Transverse colon (tissue), 4 donors: ENCODE measurements at regions of chr5 and their contacts with region 1.

Region 1: GRCh38 chr5:27158775-27159174 is 120.4 kb upstream of the CDH9 start:
- DNase-seq: no peak
- H3K4me3 ChIP-seq: no peak overlapping the region
- H3K27ac ChIP-seq: no peak overlapping the region
- H3K4me1 ChIP-seq: no peaks in the 10 kb centered on the region
- H3K27me3 ChIP-seq: no peaks in the 10 kb centered on the region
- CTCF ChIP-seq: no peak
- EP300 ChIP-seq: no peak
- POLR2A ChIP-seq: no peak

Region 2: DNA sequence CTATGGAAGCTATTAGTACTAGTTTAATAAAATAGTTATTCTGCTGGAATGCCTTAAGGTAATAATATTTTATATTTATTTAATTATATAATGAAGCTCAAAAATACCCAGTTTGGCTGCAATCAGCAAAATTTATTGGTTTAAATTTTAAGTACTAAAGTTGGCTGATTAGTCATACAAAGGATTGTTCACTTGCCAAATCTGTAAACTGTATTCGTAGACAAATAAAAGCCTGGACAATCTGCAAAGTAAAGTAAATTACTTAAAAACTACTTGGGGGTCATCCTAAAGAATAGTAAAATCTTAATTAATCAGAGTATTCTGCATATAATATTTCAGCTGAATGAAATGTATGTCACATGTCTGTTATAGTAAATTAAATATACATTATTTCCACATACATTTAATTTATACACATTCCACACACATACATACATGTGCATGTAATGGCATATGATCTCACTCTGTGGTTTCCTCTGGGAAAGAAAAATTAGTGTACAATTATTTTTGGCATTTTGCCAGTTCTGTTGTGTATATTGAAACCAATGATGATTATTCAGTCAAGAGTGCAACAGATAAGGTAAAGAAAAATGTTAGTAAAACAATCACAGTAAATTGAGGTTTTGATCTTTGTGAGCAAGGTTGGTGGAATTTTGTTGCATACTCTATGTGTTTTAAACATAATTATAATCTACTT is 576.3 kb before region 1 on chr5:
- in situ Hi-C with region 1: no loop called
- intact Hi-C with region 1: loop called (anchors 10 kb)
- DNase-seq: no peak
- H3K4me3 ChIP-seq: no peak overlapping the region
- H3K27ac ChIP-seq: no peak overlapping the region
- H3K4me1 ChIP-seq: no peaks in the 10 kb centered on the region
- H3K27me3 ChIP-seq: no peaks in the 10 kb centered on the region
- CTCF ChIP-seq: no peak
- EP300 ChIP-seq: no peak
- POLR2A ChIP-seq: no peak